ENCODE measurements at regions of chr6 and their contacts with region 1.

Region 1: DNA sequence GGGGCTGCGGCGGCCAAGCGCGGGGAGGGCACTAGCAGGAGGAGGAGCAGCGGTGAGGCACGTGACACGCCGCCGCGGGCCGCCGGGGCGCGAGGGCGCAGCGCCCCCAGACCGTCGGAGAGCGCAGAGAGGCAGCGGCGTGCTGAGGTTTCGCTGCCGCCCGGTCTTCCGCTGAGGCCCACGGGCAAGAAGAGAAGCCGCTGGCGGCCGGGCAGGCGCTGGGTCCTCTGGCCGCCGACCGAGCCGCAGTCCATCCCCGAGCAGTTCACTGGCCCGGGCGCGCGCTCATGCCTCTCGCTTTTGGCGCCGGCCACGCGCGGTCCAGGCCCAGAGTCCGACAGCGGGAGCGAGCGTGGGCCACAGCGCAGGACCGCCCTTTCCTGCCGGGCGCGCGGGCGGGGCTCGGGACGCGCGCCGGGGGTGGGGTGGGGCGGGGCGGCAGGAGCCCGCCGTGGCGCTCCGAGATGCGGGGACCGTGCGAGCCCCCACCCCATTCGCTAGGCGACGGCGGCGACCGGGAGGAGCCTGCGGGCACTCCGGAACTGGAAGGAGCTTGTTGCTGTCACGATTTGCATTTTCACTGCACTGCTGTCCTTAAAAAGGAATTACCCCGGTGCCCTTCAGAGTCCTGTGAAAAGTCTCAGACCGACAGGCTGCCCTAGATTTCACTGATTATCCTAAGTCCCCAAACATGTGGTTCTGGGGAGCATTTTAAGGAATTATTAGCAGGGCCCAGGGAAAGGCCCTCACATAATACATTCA is at the start of gene MCUR1:
- DNase-seq: peak; percentile 92
- ATAC-seq: peak; percentile 87
- H3K4me3 Mint-ChIP-seq: peak within 1 kb of the TSS; percentile 85
- H3K27ac Mint-ChIP-seq: peak within 1 kb of the TSS; percentile 87
- H3K4me1 Mint-ChIP-seq: peaks cover 27% of the 10 kb centered on the region
- H3K27me3 Mint-ChIP-seq: no peaks in the 10 kb centered on the region
- total RNA-seq, gene MCUR1: 37.9 to 59.3 TPM

Region 2: DNA sequence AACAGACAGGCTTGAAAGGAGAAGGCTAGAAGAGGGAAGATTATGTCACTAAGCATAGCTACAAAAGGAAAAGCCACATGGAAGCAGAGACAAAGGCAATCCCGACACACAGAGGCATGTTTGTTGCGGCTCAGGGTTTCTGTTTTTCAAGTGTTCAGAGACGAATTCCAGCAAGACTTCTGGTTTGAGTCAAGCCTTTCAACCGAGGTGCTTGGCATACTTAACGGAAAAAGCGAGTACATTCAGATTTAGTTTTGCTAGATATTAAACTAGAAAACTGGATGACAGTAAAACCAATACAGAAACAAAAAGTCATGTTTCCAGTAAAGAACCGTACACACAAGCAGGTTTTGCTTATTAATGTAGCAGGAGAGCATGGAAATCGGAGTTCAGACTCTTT is 27.2 kb before region 1 on chr6:
- CTCF ChIA-PET with region 1: no interaction called
- POLR2A ChIA-PET with region 1: interaction called, 10 read pairs
- intact Hi-C with region 1: loop called in 1 of 2 experiments (anchors 1 kb)
- DNase-seq: peak; percentile 61
- ATAC-seq: peak; percentile 73
- H3K4me3 Mint-ChIP-seq: peak overlapping the region; percentile 7
- H3K27ac Mint-ChIP-seq: peak overlapping the region; percentile 88
- H3K4me1 Mint-ChIP-seq: peaks cover 37% of the 10 kb centered on the region
- H3K27me3 Mint-ChIP-seq: no peaks in the 10 kb centered on the region

Region 3: GRCh38 chr6:13924146-13924948 is 110.0 kb after region 1 on chr6:
- CTCF ChIA-PET with region 1: no interaction called
- POLR2A ChIA-PET with region 1: no interaction called
- intact Hi-C with region 1: no loop called
- DNase-seq: peak; percentile 31
- ATAC-seq: peak; percentile 88
- H3K4me3 Mint-ChIP-seq: peak overlapping the region; percentile 71
- H3K27ac Mint-ChIP-seq: no peak overlapping the region
- H3K4me1 Mint-ChIP-seq: peaks cover 14% of the 10 kb centered on the region
- H3K27me3 Mint-ChIP-seq: peaks cover 51% of the 10 kb centered on the region

Region 4: GRCh38 chr6:14117158-14118090 is 303.1 kb after region 1 on chr6 and contains the start of gene CD83:
- CTCF ChIA-PET with region 1: no interaction called
- POLR2A ChIA-PET with region 1: no interaction called
- intact Hi-C with region 1: loop called in 1 of 2 experiments (anchors 2 kb)
- DNase-seq: peak; percentile 86
- ATAC-seq: peak; percentile 83
- H3K4me3 Mint-ChIP-seq: peak within 1 kb of the TSS; percentile 99
- H3K27ac Mint-ChIP-seq: peak within 1 kb of the TSS; percentile 94
- H3K4me1 Mint-ChIP-seq: peaks cover 43% of the 10 kb centered on the region
- H3K27me3 Mint-ChIP-seq: no peaks in the 10 kb centered on the region
- total RNA-seq, gene CD83: 22.0 to 22.9 TPM

Region 5: GRCh38 chr6:15662326-15663129 is 1848.2 kb after region 1 on chr6 and contains the start of gene DTNBP1:
- CTCF ChIA-PET with region 1: no interaction called
- POLR2A ChIA-PET with region 1: no interaction called
- intact Hi-C with region 1: loop called in 1 of 2 experiments (anchors 2 kb)
- DNase-seq: peak; percentile 90
- ATAC-seq: peak; percentile 91
- H3K4me3 Mint-ChIP-seq: peak within 1 kb of the TSS; percentile 78
- H3K27ac Mint-ChIP-seq: peak within 1 kb of the TSS; percentile 74
- H3K4me1 Mint-ChIP-seq: peaks cover 33% of the 10 kb centered on the region
- H3K27me3 Mint-ChIP-seq: peaks cover 3% of the 10 kb centered on the region
- total RNA-seq, gene DTNBP1: 18.4 to 23.4 TPM

Measured in activated CD4-positive, alpha-beta T cell treated with anti-CD3 and anti-CD28 coated beads for 36 hours (primary cell).